Calu3 (cell line): ENCODE measurements at regions of chr5 and their contacts with region 1.

Region 1: GRCh38 chr5:168346441-168346840 is 55.0 kb downstream of the WWC1 start:
- DNase-seq: peak; percentile 84
- H3K4me3 Mint-ChIP-seq: peak overlapping the region; percentile 53
- H3K27ac Mint-ChIP-seq: peak overlapping the region; percentile 85
- H3K4me1 Mint-ChIP-seq: peaks cover 91% of the 10 kb centered on the region
- H3K27me3 Mint-ChIP-seq: no peaks in the 10 kb centered on the region
- CTCF ChIP-seq: no peak

Region 2: DNA sequence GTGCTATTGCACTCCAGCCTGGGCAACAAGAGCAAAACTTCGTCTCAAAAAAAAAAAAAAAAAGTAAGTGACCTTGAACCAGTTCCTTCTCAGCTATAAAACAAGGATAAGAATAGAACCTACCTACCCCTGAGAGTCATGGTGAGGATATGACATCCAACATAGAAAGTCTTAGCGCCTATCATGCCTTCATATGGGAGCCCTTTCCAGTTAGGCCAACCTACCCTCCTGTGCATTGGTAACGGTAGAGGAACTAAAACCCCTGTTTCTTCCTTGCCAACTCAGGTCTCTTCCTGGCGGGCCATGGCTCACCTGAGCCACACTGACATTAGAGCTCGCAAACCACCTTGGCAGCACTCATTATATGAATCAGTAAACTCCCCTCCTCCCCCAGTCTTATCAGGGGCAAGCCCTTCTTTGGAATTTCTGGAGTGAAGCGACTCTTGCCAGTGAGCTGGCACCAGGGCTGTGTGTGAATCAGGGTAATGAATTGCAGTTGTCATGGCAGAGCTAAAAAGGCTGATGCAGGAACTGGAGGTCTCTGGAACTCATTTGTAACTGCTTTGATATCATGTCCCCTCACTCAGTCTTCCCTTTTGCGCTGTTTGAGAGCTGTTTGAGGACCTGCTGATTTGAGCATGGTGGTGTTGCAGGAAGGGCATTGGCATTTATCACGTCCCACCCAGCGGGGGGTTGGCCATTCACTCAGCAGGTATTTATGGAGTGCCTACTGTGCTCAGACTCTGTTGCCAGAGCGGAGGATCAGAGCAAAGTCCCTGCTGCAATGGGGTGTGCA is 44.6 kb before region 1 on chr5:
- CTCF ChIA-PET with region 1: interaction called, 16 read pairs
- intact Hi-C with region 1: no loop called
- DNase-seq: peak; percentile 90
- H3K4me3 Mint-ChIP-seq: peak overlapping the region; percentile 71
- H3K27ac Mint-ChIP-seq: peak overlapping the region; percentile 97
- H3K4me1 Mint-ChIP-seq: peaks cover 90% of the 10 kb centered on the region
- H3K27me3 Mint-ChIP-seq: no peaks in the 10 kb centered on the region
- CTCF ChIP-seq: no peak

Region 3: GRCh38 chr5:168328814-168329213 is 17.6 kb before region 1 on chr5:
- CTCF ChIA-PET with region 1: interaction called, 8 read pairs
- intact Hi-C with region 1: loop called (anchors 2 kb)
- DNase-seq: peak; percentile 78
- H3K4me3 Mint-ChIP-seq: peak overlapping the region; percentile 45
- H3K27ac Mint-ChIP-seq: peak overlapping the region; percentile 28
- H3K4me1 Mint-ChIP-seq: peaks cover 95% of the 10 kb centered on the region
- H3K27me3 Mint-ChIP-seq: no peaks in the 10 kb centered on the region
- CTCF ChIP-seq: no peak

Region 4: GRCh38 chr5:168365581-168366081 is 19.2 kb after region 1 on chr5:
- CTCF ChIA-PET with region 1: interaction called, 38 read pairs
- intact Hi-C with region 1: loop called (anchors 2 kb)
- DNase-seq: peak; percentile 82
- H3K4me3 Mint-ChIP-seq: peak overlapping the region; percentile 49
- H3K27ac Mint-ChIP-seq: peak overlapping the region; percentile 72
- H3K4me1 Mint-ChIP-seq: peaks cover 66% of the 10 kb centered on the region
- H3K27me3 Mint-ChIP-seq: no peaks in the 10 kb centered on the region
- CTCF ChIP-seq: peak; percentile 50

Region 5: GRCh38 chr5:168404365-168404764 is 57.9 kb after region 1 on chr5:
- CTCF ChIA-PET with region 1: interaction called, 3 read pairs
- intact Hi-C with region 1: loop called (anchors 2 kb)
- DNase-seq: no peak
- H3K4me3 Mint-ChIP-seq: no peak overlapping the region
- H3K27ac Mint-ChIP-seq: no peak overlapping the region
- H3K4me1 Mint-ChIP-seq: peaks cover 45% of the 10 kb centered on the region
- H3K27me3 Mint-ChIP-seq: no peaks in the 10 kb centered on the region
- CTCF ChIP-seq: no peak